ENCODE measurements at regions of chr7 and their contacts with region 1.

Region 1: DNA sequence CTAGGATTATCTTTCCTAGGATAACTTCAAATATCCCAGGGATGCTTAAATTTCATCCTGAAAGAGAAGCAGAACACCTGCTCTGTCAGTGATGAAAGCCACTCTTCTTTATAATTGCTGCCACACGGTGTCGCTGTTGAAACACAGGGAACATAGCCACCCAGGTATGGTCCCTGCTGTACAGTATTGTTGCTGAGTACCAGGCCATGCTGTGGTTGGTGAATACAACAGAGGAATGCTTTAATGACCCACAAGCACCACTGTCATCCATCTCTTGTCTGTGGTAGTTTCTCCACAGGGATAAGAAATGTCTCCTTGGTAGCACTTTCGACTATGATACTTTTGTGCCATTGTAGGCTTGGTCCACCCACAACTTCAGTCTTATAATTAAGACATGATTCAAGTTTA is 70.6 kb upstream of the STARD3NL start:
- DNase-seq: peak; percentile 31
- H3K4me3 Mint-ChIP-seq: no peak overlapping the region
- H3K27ac Mint-ChIP-seq: no peak overlapping the region
- H3K4me1 Mint-ChIP-seq: no peaks in the 10 kb centered on the region
- H3K27me3 Mint-ChIP-seq: peaks cover 39% of the 10 kb centered on the region

Region 2: DNA sequence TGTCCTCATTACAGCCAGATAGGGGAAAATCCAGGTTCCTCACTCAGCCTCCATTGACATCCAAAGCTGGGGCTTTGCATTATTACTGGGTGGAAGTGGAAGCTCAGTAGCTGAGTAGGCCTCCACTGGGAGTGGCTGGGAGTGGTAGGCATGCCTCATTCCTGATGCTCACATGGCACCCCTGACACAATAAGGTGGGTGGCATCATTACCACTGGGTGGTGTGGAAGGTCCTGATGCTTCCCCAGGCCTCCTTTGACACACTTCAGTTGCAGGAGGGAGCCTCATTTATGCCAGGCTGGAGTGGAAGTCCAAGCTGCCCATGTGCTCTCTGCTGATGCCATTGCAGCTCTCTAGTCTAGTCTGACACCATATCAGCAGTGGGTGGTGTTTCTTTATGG is 472.1 kb before region 1 on chr7:
- intact Hi-C with region 1: no loop called
- DNase-seq: no peak
- H3K4me3 Mint-ChIP-seq: no peak overlapping the region
- H3K27ac Mint-ChIP-seq: no peak overlapping the region
- H3K4me1 Mint-ChIP-seq: no peaks in the 10 kb centered on the region
- H3K27me3 Mint-ChIP-seq: peaks cover 22% of the 10 kb centered on the region

Region 3: GRCh38 chr7:38222481-38223096 is 115.1 kb after region 1 on chr7:
- intact Hi-C with region 1: loop called (anchors 1 kb)
- DNase-seq: peak; percentile 25
- H3K4me3 Mint-ChIP-seq: no peak overlapping the region
- H3K27ac Mint-ChIP-seq: no peak overlapping the region
- H3K4me1 Mint-ChIP-seq: peaks cover 35% of the 10 kb centered on the region
- H3K27me3 Mint-ChIP-seq: no peaks in the 10 kb centered on the region

Region 4: DNA sequence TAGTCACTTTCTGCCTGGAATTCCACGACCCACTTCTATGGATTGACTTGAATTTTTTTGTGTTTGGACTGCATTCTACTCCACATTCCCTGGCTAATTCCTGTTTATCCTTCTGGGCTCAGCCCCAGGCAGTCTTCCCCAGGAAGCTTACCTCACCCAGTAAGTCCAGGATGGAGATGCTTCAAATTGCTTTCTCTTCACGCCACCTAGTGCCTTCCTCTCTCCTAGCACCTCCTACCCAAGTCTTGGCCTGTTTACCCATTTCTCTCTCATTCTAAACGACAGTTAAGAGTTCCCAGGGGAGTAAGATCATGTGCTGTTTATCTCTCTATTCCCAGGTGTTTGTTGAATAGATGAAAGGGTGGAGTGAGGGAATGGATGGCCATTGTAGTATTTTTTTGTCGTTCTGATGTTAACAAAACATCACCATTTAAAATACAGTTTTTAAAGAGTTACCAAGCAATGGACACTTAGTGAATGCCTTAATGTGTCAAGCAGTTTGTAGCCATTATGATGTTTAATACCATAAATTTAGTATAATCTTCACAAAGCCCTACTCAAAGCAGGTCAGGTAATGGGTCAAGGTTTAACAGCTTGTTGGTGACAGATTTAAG is 211.4 kb after region 1 on chr7:
- intact Hi-C with region 1: loop called (anchors 1 kb)
- DNase-seq: no peak
- H3K4me3 Mint-ChIP-seq: peak overlapping the region; percentile 38
- H3K27ac Mint-ChIP-seq: peak overlapping the region; percentile 23
- H3K4me1 Mint-ChIP-seq: peaks cover 14% of the 10 kb centered on the region
- H3K27me3 Mint-ChIP-seq: peaks cover 2% of the 10 kb centered on the region

Region 5: DNA sequence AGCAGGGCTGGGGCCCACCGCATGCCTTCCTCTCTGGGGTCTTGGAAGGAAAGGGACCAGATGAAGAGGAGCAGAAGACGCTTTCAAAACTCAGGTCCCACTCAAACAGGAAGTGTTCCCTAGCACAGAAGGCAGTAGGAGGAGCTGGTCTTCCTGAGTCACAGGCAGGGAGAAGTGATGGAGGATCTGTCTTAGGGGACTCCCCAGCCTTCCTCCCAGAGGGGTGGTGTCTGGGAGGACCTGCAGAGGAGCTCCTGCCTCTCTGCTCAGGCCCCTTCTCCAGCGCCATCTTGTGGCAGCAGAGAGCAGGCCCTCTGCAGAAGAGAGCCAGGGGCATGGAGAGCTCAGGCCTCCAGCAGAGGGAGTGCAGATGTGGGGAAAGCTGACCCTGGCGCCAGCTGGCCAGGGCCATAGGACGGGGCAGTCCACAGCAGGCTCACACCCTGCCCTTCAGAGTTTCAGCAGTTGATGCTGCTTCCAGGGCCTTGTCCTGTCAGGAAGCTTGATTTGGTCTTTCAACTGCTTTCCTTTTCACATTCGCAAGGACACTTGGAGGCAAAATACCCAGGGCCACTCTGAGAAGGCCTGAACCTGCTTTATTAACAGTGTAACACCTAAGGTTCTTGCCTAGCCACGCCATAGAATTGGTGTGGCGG is 228.1 kb after region 1 on chr7:
- intact Hi-C with region 1: loop called (anchors 1 kb)
- DNase-seq: peak; percentile 72
- H3K4me3 Mint-ChIP-seq: peak overlapping the region; percentile 64
- H3K27ac Mint-ChIP-seq: peak overlapping the region; percentile 43
- H3K4me1 Mint-ChIP-seq: peaks cover 35% of the 10 kb centered on the region
- H3K27me3 Mint-ChIP-seq: no peaks in the 10 kb centered on the region

Region 6: GRCh38 chr7:38369816-38370493 is 262.5 kb after region 1 on chr7:
- intact Hi-C with region 1: loop called (anchors 1 kb)
- DNase-seq: peak; percentile 61
- H3K4me3 Mint-ChIP-seq: no peak overlapping the region
- H3K27ac Mint-ChIP-seq: peak overlapping the region; percentile 41
- H3K4me1 Mint-ChIP-seq: peaks cover 40% of the 10 kb centered on the region
- H3K27me3 Mint-ChIP-seq: no peaks in the 10 kb centered on the region

Region 7: DNA sequence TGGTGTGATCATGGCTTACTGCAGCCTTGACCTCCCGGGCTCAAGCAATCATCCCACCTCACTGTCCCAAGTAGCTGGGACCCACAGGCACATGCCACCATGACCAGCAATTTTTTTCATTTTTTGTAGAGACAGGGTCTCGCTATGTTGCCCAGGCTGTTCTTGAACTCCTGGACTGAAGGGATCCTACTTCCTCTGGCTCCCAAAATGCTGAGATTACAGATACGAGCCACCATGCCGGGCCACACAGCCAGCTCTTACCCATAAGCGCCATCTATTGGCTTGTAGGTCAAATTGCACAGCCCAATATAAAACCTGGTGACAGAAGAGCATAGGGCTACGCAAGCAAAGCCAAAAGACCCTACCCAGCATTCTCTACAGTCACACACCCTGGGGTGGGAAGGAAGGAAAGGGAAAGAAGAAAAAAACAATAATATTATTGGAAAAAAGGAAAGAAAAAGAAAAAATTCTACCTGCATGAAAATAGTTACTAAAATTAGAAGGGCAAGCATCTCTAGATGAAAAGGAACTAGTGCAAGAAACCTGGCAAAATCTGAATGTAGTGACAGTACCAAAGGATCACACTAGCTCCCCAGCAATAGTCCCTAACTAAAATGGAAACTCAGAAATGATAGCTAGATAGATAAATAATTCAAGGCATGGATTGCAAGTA is 553.1 kb after region 1 on chr7:
- intact Hi-C with region 1: loop called (anchors 5 kb)
- DNase-seq: no peak
- H3K4me3 Mint-ChIP-seq: no peak overlapping the region
- H3K27ac Mint-ChIP-seq: no peak overlapping the region
- H3K4me1 Mint-ChIP-seq: no peaks in the 10 kb centered on the region
- H3K27me3 Mint-ChIP-seq: peaks cover 3% of the 10 kb centered on the region

Region 8: GRCh38 chr7:38975944-38976392 is 868.5 kb after region 1 on chr7:
- intact Hi-C with region 1: no loop called
- DNase-seq: no peak
- H3K4me3 Mint-ChIP-seq: no peak overlapping the region
- H3K27ac Mint-ChIP-seq: no peak overlapping the region
- H3K4me1 Mint-ChIP-seq: no peaks in the 10 kb centered on the region
- H3K27me3 Mint-ChIP-seq: peaks cover 33% of the 10 kb centered on the region

Measured in activated T-helper 1 cell treated with anti-CD3 and anti-CD28 coated beads, Interleukin-12 subunit alpha, Interleukin-12 subunit beta, Interleukin-2, Interleukin-4 antibody, amounts not matched to agents 30 ng/mL and 10 ng/mL and 1 ng/mL, durations not matched to agents 14 hours and 24 hours and 36 hours (primary cell).